ENCODE measurements at regions of chr9 and their contacts with region 1.

Region 1: GRCh38 chr9:136118320-136119060 is at the start of gene TMEM250:
- DNase-seq: peak; percentile 95
- ATAC-seq: peak; percentile 93
- H3K4me3 ChIP-seq: peak within 1 kb of the TSS; percentile 64
- H3K27ac ChIP-seq: peak within 1 kb of the TSS; percentile 74
- H3K4me1 ChIP-seq: peaks cover 11% of the 10 kb centered on the region
- H3K27me3 ChIP-seq: no peaks in the 10 kb centered on the region; the same call in 1 of the 2 replicates
- CTCF ChIP-seq: peak; percentile 1; the same call in 1 of the 2 replicates
- POLR2A ChIP-seq: peak; percentile 28; the same call in 1 of the 2 replicates
- RAD21 ChIP-seq: no peak
- total RNA-seq, gene TMEM250: 12.5 and 14.0 TPM in 2 replicates

Region 2: DNA sequence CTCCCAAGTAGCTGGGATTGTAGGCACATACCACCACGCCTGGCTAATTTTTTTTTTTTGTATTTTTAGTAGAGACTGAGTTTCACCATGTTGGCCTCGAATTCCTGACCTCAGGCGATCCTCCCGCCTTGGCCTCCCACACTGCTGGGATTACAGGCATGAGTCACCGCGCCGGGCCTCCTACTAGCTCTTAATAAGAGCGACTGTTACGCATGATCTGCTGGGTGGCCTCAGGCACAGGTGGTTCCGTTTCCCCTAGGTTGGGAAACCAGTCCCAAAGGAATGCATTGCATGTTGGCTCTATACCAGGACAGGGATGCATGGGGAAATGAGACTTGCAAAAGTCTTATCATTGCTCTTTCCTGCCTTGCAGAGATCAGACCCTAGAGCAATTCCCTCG is 823.7 kb before region 1 on chr9:
- CTCF ChIA-PET with region 1: no interaction called
- POLR2A ChIA-PET with region 1: no interaction called
- dilution Hi-C with region 1: no loop called
- in situ Hi-C with region 1: no loop called
- intact Hi-C with region 1: no loop called
- DNase-seq: no peak
- ATAC-seq: no peak
- H3K4me3 ChIP-seq: no peak overlapping the region
- H3K27ac ChIP-seq: no peak overlapping the region
- H3K4me1 ChIP-seq: no peaks in the 10 kb centered on the region
- H3K27me3 ChIP-seq: no peaks in the 10 kb centered on the region
- CTCF ChIP-seq: no peak
- POLR2A ChIP-seq: no peak
- RAD21 ChIP-seq: no peak

Region 3: DNA sequence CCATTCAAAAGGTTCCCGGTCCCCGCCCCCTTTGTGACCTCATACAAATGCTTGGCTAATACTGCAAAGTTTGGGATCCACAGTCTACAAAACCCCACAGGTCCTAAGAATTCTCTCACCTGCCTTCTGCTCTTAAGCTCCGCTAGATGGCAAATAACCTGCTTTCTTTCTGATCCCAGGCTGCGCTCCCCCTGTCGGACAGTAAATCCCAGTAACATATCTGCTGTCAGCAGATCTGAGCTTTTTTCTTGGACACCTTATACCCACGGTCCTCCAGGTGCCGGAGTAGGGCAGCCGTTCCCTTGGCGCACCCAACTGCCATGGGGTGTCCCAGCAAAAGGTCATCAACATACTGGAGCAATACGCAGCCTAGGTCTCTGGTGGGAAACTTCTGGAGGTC is 677.9 kb before region 1 on chr9:
- CTCF ChIA-PET with region 1: no interaction called
- POLR2A ChIA-PET with region 1: no interaction called
- dilution Hi-C with region 1: no loop called
- in situ Hi-C with region 1: no loop called
- intact Hi-C with region 1: no loop called
- DNase-seq: no peak
- ATAC-seq: no peak
- H3K4me3 ChIP-seq: no peak overlapping the region
- H3K27ac ChIP-seq: no peak overlapping the region
- H3K4me1 ChIP-seq: no peaks in the 10 kb centered on the region
- H3K27me3 ChIP-seq: no peaks in the 10 kb centered on the region; the same call in 1 of the 2 replicates
- CTCF ChIP-seq: no peak
- POLR2A ChIP-seq: no peak
- RAD21 ChIP-seq: no peak

Region 4: GRCh38 chr9:135602789-135603481 is 515.6 kb before region 1 on chr9:
- CTCF ChIA-PET with region 1: no interaction called
- POLR2A ChIA-PET with region 1: no interaction called
- dilution Hi-C with region 1: no loop called
- in situ Hi-C with region 1: no loop called
- intact Hi-C with region 1: loop called (anchors 5 kb)
- DNase-seq: peak; percentile 27
- ATAC-seq: peak; percentile 65
- H3K4me3 ChIP-seq: no peak overlapping the region
- H3K27ac ChIP-seq: no peak overlapping the region
- H3K4me1 ChIP-seq: no peaks in the 10 kb centered on the region
- H3K27me3 ChIP-seq: no peaks in the 10 kb centered on the region; the same call in none of the 2 replicates
- CTCF ChIP-seq: peak; percentile 74
- POLR2A ChIP-seq: no peak
- RAD21 ChIP-seq: peak; percentile 25; the same call in 1 of the 2 replicates

Region 5: GRCh38 chr9:135797507-135798262 is 320.8 kb before region 1 on chr9:
- CTCF ChIA-PET with region 1: no interaction called
- POLR2A ChIA-PET with region 1: no interaction called
- dilution Hi-C with region 1: no loop called
- in situ Hi-C with region 1: no loop called
- intact Hi-C with region 1: loop called (anchors 5 kb)
- DNase-seq: peak; percentile 31
- ATAC-seq: peak; percentile 94
- H3K4me3 ChIP-seq: no peak overlapping the region
- H3K27ac ChIP-seq: no peak overlapping the region
- H3K4me1 ChIP-seq: no peaks in the 10 kb centered on the region
- H3K27me3 ChIP-seq: peaks cover 9% of the 10 kb centered on the region
- CTCF ChIP-seq: peak; percentile 66
- POLR2A ChIP-seq: no peak
- RAD21 ChIP-seq: peak; percentile 65

Region 6: GRCh38 chr9:135961277-135961705 is 157.2 kb before region 1 on chr9 and contains the start of gene UBAC1:
- CTCF ChIA-PET with region 1: interaction called, 15 read pairs
- POLR2A ChIA-PET with region 1: no interaction called
- dilution Hi-C with region 1: no loop called
- in situ Hi-C with region 1: loop called (anchors 5 kb)
- intact Hi-C with region 1: no loop called
- DNase-seq: peak; percentile 94
- ATAC-seq: peak; percentile 93
- H3K4me3 ChIP-seq: peak within 1 kb of the TSS; percentile 74
- H3K27ac ChIP-seq: peak within 1 kb of the TSS; percentile 47
- H3K4me1 ChIP-seq: no peaks in the 10 kb centered on the region; the same call in none of the 2 replicates
- H3K27me3 ChIP-seq: no peaks in the 10 kb centered on the region; the same call in 1 of the 2 replicates
- CTCF ChIP-seq: peak; percentile 55
- POLR2A ChIP-seq: no peak
- RAD21 ChIP-seq: no peak
- total RNA-seq, gene UBAC1: 25.3 and 33.6 TPM in 2 replicates

Region 7: GRCh38 chr9:136093995-136094881 is 24.3 kb before region 1 on chr9:
- CTCF ChIA-PET with region 1: interaction called, 5 read pairs
- POLR2A ChIA-PET with region 1: no interaction called
- dilution Hi-C with region 1: no loop called
- in situ Hi-C with region 1: no loop called
- intact Hi-C with region 1: loop called (anchors 1 kb)
- DNase-seq: peak; percentile 31
- ATAC-seq: peak; percentile 46
- H3K4me3 ChIP-seq: peak overlapping the region; percentile 94
- H3K27ac ChIP-seq: peak overlapping the region; percentile 80
- H3K4me1 ChIP-seq: peaks cover 23% of the 10 kb centered on the region
- H3K27me3 ChIP-seq: no peaks in the 10 kb centered on the region
- CTCF ChIP-seq: no peak
- POLR2A ChIP-seq: no peak
- RAD21 ChIP-seq: no peak

Region 8: GRCh38 chr9:136527721-136528691 is 409.5 kb after region 1 on chr9:
- CTCF ChIA-PET with region 1: no interaction called
- POLR2A ChIA-PET with region 1: no interaction called
- dilution Hi-C with region 1: no loop called
- in situ Hi-C with region 1: no loop called
- intact Hi-C with region 1: no loop called
- DNase-seq: no peak
- ATAC-seq: peak; percentile 30
- H3K4me3 ChIP-seq: no peak overlapping the region
- H3K27ac ChIP-seq: no peak overlapping the region
- H3K4me1 ChIP-seq: peaks cover 2% of the 10 kb centered on the region; the same call in 1 of the 2 replicates
- H3K27me3 ChIP-seq: no peaks in the 10 kb centered on the region
- CTCF ChIP-seq: no peak
- POLR2A ChIP-seq: no peak
- RAD21 ChIP-seq: no peak

Measured in IMR-90 (cell line).